ENCODE measurements at regions of chr5 and their contacts with region 1.

Region 1: GRCh38 chr5:149828161-149828884 is 98.2 kb downstream of the PPARGC1B start:
- DNase-seq: peak; percentile 91
- ATAC-seq: peak; percentile 93
- H3K4me3 ChIP-seq: no peak overlapping the region
- H3K27ac ChIP-seq: no peak overlapping the region
- H3K4me1 ChIP-seq: no peaks in the 10 kb centered on the region
- H3K27me3 ChIP-seq: peaks cover 2% of the 10 kb centered on the region; the same call in 1 of the 2 replicates
- CTCF ChIP-seq: peak; percentile 95
- POLR2A ChIP-seq: no peak
- RAD21 ChIP-seq: peak; percentile 96

Region 2: GRCh38 chr5:148760945-148761638 is 1067.2 kb before region 1 on chr5:
- CTCF ChIA-PET with region 1: no interaction called
- POLR2A ChIA-PET with region 1: no interaction called
- dilution Hi-C with region 1: no loop called
- in situ Hi-C with region 1: no loop called
- intact Hi-C with region 1: no loop called
- DNase-seq: no peak
- ATAC-seq: no peak
- H3K4me3 ChIP-seq: no peak overlapping the region
- H3K27ac ChIP-seq: no peak overlapping the region
- H3K4me1 ChIP-seq: no peaks in the 10 kb centered on the region
- H3K27me3 ChIP-seq: peaks cover 2% of the 10 kb centered on the region; the same call in 1 of the 2 replicates
- CTCF ChIP-seq: no peak
- POLR2A ChIP-seq: no peak
- RAD21 ChIP-seq: no peak

Region 3: GRCh38 chr5:149656576-149657182 is 171.6 kb before region 1 on chr5:
- CTCF ChIA-PET with region 1: no interaction called
- POLR2A ChIA-PET with region 1: no interaction called
- dilution Hi-C with region 1: no loop called
- in situ Hi-C with region 1: no loop called
- intact Hi-C with region 1: no loop called
- DNase-seq: no peak
- ATAC-seq: no peak
- H3K4me3 ChIP-seq: no peak overlapping the region
- H3K27ac ChIP-seq: no peak overlapping the region
- H3K4me1 ChIP-seq: no peaks in the 10 kb centered on the region
- H3K27me3 ChIP-seq: peaks cover 41% of the 10 kb centered on the region
- CTCF ChIP-seq: peak; percentile 24; the same call in 1 of the 2 replicates
- POLR2A ChIP-seq: no peak
- RAD21 ChIP-seq: no peak

Region 4: GRCh38 chr5:149667084-149667828 is 161.1 kb before region 1 on chr5:
- CTCF ChIA-PET with region 1: no interaction called
- POLR2A ChIA-PET with region 1: no interaction called
- dilution Hi-C with region 1: no loop called
- in situ Hi-C with region 1: no loop called
- intact Hi-C with region 1: loop called (anchors 1 kb)
- DNase-seq: peak; percentile 7
- ATAC-seq: peak; percentile 53; the same call in 1 of the 2 replicates
- H3K4me3 ChIP-seq: no peak overlapping the region
- H3K27ac ChIP-seq: no peak overlapping the region
- H3K4me1 ChIP-seq: no peaks in the 10 kb centered on the region
- H3K27me3 ChIP-seq: peaks cover 12% of the 10 kb centered on the region
- CTCF ChIP-seq: peak; percentile 56
- POLR2A ChIP-seq: no peak
- RAD21 ChIP-seq: peak; percentile 41; the same call in 1 of the 2 replicates